ENCODE measurements at regions of chr4 and their contacts with region 1.

Region 1: GRCh38 chr4:36322921-36323354 is 41.5 kb downstream of the DTHD1 start:
- DNase-seq: no peak
- ATAC-seq: peak; percentile 66

Region 2: DNA sequence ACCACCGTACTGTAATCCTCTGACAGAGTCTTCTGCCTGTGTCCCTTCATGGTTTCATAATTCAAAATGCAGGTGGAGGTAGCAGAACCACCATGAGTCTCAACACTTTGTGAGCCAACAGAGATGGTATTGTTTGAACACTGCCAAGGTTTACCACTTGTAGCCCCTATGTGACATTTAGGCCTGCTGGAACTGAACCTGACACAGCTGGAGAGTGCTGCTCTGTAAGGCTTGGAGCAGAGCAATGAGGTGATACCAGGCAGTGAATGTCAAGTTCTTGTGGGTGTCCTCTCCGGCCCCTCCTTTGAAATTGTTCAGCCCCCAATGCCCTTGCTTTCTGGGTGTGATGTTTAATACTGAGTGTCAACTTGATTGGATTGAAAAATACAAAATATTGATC is 1121.5 kb before region 1 on chr4:
- intact Hi-C with region 1: loop called (anchors 5 kb)
- DNase-seq: no peak
- ATAC-seq: no peak